Left ventricle myocardium inferior (tissue), 1 donor: ENCODE measurements at regions of chr18 and their contacts with region 1.

Region 1: DNA sequence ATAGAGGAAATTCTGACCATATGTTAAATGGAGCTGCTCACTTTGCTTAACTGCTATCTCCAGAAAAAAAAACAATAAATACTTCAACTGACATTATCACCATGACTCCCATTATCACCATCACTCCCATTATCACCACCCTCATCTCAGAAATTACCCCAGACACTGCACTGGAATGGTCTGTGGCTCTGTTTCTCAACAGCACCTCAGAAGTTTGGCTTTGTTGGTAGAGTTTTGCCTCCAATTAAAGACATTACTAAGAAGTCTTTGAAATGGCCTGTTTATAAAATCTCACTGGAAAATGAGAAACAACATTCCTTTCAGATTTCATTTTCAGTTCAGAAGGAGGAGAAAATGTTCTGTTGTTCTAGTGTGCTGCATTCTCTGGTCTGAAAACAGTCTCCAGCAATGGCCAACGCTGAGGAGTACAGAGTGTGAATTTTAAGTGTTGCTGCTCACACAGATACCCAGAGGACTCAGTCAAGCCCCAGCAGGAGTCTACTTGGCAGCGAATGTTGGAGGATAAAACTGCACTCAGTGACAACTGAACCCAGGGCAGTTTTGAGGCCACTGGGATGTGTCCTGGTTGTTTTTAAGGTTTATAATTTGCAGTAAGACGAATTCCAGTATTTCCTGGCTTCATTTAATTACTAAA is 364.5 kb upstream of the CDH2 start:
- DNase-seq: peak; percentile 14
- H3K4me3 ChIP-seq: no peak overlapping the region
- H3K27ac ChIP-seq: peak overlapping the region; percentile 48
- H3K4me1 ChIP-seq: peaks cover 3% of the 10 kb centered on the region
- H3K27me3 ChIP-seq: no peaks in the 10 kb centered on the region
- CTCF ChIP-seq: no peak

Region 2: DNA sequence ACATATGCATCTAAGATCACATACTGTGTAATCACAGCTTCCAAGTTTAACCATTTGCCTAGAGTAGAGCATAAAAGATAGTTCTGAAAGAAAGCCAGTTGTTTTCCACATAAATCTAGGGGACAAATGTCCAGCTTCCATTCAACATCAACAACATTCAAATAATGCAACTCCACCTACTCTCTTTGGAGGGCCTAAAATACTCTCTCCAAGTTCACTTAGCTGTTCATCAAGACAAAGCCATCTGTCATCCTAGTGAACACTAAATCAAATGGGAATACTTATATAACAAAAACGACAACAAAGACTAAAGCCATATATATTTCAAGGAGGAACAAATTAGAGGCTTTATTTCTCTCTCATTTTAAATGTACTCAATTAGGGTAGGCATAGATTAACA is 142.9 kb before region 1 on chr18:
- intact Hi-C with region 1: loop called (anchors 5 kb)
- DNase-seq: no peak
- H3K4me3 ChIP-seq: no peak overlapping the region
- H3K27ac ChIP-seq: no peak overlapping the region
- H3K4me1 ChIP-seq: no peaks in the 10 kb centered on the region
- H3K27me3 ChIP-seq: no peaks in the 10 kb centered on the region
- CTCF ChIP-seq: no peak